Common myeloid progenitor, CD34-positive (primary cell): ENCODE measurements at regions of chr14 and their contacts with region 1.

Region 1: GRCh38 chr14:92951912-92952471 is 29.0 kb downstream of the CHGA start:
- DNase-seq: peak; percentile 65 to 83 (median 75)
- H3K4me3 ChIP-seq: no peak overlapping the region
- H3K27ac ChIP-seq: peak overlapping the region in 1 of 2 experiments; percentile 30
- H3K4me1 ChIP-seq: no peaks in the 10 kb centered on the region
- H3K27me3 ChIP-seq: no peaks in the 10 kb centered on the region

Region 2: GRCh38 chr14:93137864-93138263 is 185.9 kb after region 1 on chr14:
- CTCF ChIA-PET with region 1: interaction called, 34 read pairs
- POLR2A ChIA-PET with region 1: interaction called, 4 read pairs
- DNase-seq: no peak
- H3K4me3 ChIP-seq: no peak overlapping the region
- H3K27ac ChIP-seq: no peak overlapping the region
- H3K4me1 ChIP-seq: no peaks in the 10 kb centered on the region
- H3K27me3 ChIP-seq: no peaks in the 10 kb centered on the region